ENCODE measurements at regions of chr5 and their contacts with region 1.

Region 1: GRCh38 chr5:56270568-56271392 is 37.6 kb upstream of the ANKRD55 start:
- DNase-seq: peak; percentile 65 to 74 (median 72)
- H3K4me3 ChIP-seq: no peak overlapping the region
- H3K4me3 Mint-ChIP-seq: peak overlapping the region; percentile 51 to 86 (median 74)
- H3K27ac ChIP-seq: no peak overlapping the region
- H3K27ac Mint-ChIP-seq: peak overlapping the region; percentile 30 to 84 (median 50)
- H3K4me1 ChIP-seq: peaks cover 13% of the 10 kb centered on the region
- H3K4me1 Mint-ChIP-seq: peaks cover 11 to 21% (median 13%) of the 10 kb centered on the region in 4 donors
- H3K27me3 ChIP-seq: no peaks in the 10 kb centered on the region
- H3K27me3 Mint-ChIP-seq: no peaks in the 10 kb centered on the region

Region 2: GRCh38 chr5:56323505-56323904 is 52.7 kb after region 1 on chr5:
- CTCF ChIA-PET with region 1: interaction called, 7 read pairs
- POLR2A ChIA-PET with region 1: interaction called, 4 read pairs
- intact Hi-C with region 1: loop called (anchors 1 kb)
- DNase-seq: no peak
- H3K4me3 ChIP-seq: no peak overlapping the region
- H3K4me3 Mint-ChIP-seq: no peak overlapping the region
- H3K27ac ChIP-seq: no peak overlapping the region
- H3K27ac Mint-ChIP-seq: peak overlapping the region in 3 of 7 donors; percentile 18 to 79 (median 64)
- H3K4me1 ChIP-seq: peaks cover 41% of the 10 kb centered on the region
- H3K4me1 Mint-ChIP-seq: peaks cover 31 to 69% (median 47%) of the 10 kb centered on the region in 4 donors
- H3K27me3 ChIP-seq: no peaks in the 10 kb centered on the region
- H3K27me3 Mint-ChIP-seq: no peaks in the 10 kb centered on the region

Region 3: DNA sequence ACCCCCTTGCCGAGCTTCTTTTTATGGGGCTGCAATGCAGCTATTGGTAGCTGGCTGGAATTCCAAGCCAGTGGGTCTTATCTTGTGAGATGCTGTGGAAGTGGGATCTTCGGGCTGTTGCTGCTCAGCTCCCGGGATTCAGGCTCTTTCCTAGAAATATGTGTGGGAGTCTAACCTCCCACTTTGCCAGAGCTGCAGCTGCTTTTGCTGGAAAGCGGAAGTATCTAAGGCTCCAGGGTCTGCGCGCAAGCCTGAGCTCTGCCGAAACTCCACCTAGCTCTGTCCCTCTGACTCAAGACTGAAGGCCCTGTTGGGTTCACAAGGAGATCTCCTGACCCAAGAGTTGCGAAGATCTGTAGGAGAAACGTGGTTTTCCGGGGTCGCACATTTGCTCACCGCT is 113.4 kb after region 1 on chr5:
- CTCF ChIA-PET with region 1: no interaction called
- POLR2A ChIA-PET with region 1: no interaction called
- intact Hi-C with region 1: no loop called
- DNase-seq: no peak
- H3K4me3 ChIP-seq: no peak overlapping the region
- H3K4me3 Mint-ChIP-seq: no peak overlapping the region
- H3K27ac ChIP-seq: no peak overlapping the region
- H3K27ac Mint-ChIP-seq: no peak overlapping the region
- H3K4me1 ChIP-seq: no peaks in the 10 kb centered on the region
- H3K4me1 Mint-ChIP-seq: peaks cover 0 to 2% (median 0%) of the 10 kb centered on the region in 4 donors
- H3K27me3 ChIP-seq: no peaks in the 10 kb centered on the region
- H3K27me3 Mint-ChIP-seq: peaks cover 0 to 2% of the 10 kb centered on the region in 2 donors

Region 4: GRCh38 chr5:56481428-56482357 is 210.9 kb after region 1 on chr5:
- CTCF ChIA-PET with region 1: interaction called, 13 read pairs
- POLR2A ChIA-PET with region 1: interaction called, 16 read pairs
- intact Hi-C with region 1: loop called (anchors 1 kb)
- DNase-seq: peak in 4 of 5 donors; percentile 13 to 39 (median 27)
- H3K4me3 ChIP-seq: peak overlapping the region; percentile 52 to 55
- H3K4me3 Mint-ChIP-seq: peak overlapping the region; percentile 87 to 95 (median 92)
- H3K27ac ChIP-seq: peak overlapping the region; percentile 80
- H3K27ac Mint-ChIP-seq: peak overlapping the region; percentile 83 to 98 (median 95)
- H3K4me1 ChIP-seq: peaks cover 49% of the 10 kb centered on the region
- H3K4me1 Mint-ChIP-seq: peaks cover 30 to 54% (median 42%) of the 10 kb centered on the region in 4 donors
- H3K27me3 ChIP-seq: no peaks in the 10 kb centered on the region
- H3K27me3 Mint-ChIP-seq: no peaks in the 10 kb centered on the region

Region 5: DNA sequence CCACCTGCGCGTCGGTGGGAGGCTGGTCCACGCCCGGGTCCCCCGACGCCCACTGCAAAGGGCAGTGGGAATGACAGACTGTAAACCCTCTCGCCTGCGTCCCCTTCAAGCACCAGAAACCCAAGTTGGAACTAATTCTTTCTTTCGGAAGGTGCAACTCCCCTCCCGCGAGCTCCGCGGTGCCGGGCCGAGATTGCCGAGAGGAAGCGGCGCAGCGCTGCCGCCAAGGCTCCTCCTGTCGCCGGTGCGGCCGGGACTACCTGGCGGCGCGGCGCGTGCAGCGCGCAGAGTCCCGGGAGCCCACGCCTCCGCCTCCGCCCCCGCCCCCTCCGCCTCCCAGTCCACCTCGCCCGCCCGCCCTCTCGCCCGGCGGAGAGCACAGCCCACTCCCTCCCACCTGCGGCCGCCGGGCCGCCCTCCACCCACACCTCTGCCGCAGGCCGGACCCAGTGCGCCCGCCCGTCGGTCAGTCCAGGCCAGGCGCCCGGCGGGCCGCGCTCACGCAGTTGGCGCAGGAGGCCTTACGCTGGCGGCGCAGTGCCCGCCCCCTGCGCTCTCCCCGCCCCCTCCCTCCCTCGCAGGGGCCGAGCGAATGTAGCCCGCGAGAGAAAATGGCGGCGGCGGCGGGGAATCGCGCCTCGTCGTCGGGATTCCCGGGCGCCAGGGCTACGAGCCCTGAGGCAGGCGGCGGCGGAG is 544.3 kb after region 1 on chr5 and contains the start of gene MAP3K1:
- CTCF ChIA-PET with region 1: interaction called, 11 read pairs
- POLR2A ChIA-PET with region 1: no interaction called
- intact Hi-C with region 1: loop called (anchors 1 kb)
- DNase-seq: peak; percentile 82 to 91 (median 88)
- H3K4me3 ChIP-seq: peak within 1 kb of the TSS; percentile 78 to 87
- H3K4me3 Mint-ChIP-seq: peak within 1 kb of the TSS; percentile 92 to 97 (median 94)
- H3K27ac ChIP-seq: peak within 1 kb of the TSS; percentile 90
- H3K27ac Mint-ChIP-seq: peak within 1 kb of the TSS; percentile 94 to 99 (median 96)
- H3K4me1 ChIP-seq: peaks cover 37% of the 10 kb centered on the region
- H3K4me1 Mint-ChIP-seq: peaks cover 16 to 47% (median 26%) of the 10 kb centered on the region in 4 donors
- H3K27me3 ChIP-seq: no peaks in the 10 kb centered on the region
- H3K27me3 Mint-ChIP-seq: no peaks in the 10 kb centered on the region
- total RNA-seq, gene MAP3K1: 139 to 146 TPM

Region 6: DNA sequence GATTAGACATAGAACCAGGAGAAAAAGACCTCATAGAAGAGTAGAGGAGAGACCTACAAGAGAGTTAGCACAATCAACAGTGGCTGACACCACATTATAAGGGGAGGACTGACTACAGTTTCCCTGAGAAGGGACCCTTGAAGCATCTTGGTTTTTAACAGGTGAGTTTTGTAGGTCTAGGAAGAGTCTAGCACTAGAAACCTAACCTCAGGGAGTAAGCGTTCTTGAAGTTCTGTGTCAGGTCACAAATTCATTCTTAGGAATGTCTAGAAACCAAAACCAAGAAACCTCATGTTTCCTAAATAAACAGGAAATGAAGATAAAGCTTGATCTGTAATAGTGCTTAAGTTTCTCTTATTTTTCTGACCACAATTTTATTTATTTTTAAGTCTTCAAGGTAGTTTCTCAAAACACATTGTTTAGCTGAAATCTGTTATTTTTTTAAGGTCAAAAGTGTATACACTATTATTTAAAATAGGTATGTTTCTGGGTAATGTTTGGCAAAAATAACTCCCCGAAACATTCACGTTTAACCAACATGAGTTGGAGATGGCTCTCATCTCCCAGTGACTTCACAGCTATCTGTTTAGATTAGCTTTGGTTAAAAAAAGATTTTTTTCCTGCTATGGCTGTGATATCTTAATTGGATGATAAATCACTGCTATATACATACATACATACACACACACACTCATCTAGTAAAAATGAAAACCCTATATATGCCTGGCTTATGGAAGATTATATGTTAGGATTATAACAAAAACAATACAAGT is 581.6 kb after region 1 on chr5:
- CTCF ChIA-PET with region 1: interaction called, 8 read pairs
- POLR2A ChIA-PET with region 1: interaction called, 10 read pairs
- intact Hi-C with region 1: loop called (anchors 5 kb)
- DNase-seq: peak in 3 of 5 donors; percentile 20 to 35 (median 24)
- H3K4me3 ChIP-seq: no peak overlapping the region
- H3K4me3 Mint-ChIP-seq: peak overlapping the region; percentile 67 to 88 (median 74)
- H3K27ac ChIP-seq: peak overlapping the region; percentile 34
- H3K27ac Mint-ChIP-seq: peak overlapping the region in 6 of 7 donors; percentile 43 to 83 (median 74)
- H3K4me1 ChIP-seq: peaks cover 94% of the 10 kb centered on the region
- H3K4me1 Mint-ChIP-seq: peaks cover 64 to 94% (median 80%) of the 10 kb centered on the region in 4 donors
- H3K27me3 ChIP-seq: no peaks in the 10 kb centered on the region
- H3K27me3 Mint-ChIP-seq: no peaks in the 10 kb centered on the region

Region 7: DNA sequence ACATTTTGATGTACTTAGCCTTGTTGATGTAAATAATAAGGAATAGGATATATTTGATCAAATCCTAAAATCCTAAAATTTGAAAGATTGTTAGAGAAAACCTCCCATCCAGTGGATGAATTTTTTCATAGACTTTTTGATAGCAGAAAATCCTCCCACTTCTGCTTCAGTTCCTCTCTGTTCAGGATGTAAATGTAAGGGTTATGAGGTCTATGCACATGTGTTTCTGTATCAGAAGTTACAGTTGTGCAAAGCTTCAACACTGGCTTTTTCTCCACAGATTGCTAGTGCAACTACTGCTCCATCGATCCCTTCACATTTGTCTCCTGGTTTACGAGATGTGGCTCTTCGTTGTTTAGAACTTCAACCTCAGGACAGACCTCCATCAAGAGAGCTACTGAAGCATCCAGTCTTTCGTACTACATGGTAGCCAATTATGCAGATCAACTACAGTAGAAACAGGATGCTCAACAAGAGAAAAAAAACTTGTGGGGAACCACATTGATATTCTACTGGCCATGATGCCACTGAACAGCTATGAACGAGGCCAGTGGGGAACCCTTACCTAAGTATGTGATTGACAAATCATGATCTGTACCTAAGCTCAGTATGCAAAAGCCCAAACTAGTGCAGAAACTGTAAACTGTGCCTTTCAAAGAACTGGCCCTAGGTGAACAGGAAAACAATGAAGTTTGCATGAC is 622.6 kb after region 1 on chr5:
- CTCF ChIA-PET with region 1: interaction called, 38 read pairs
- POLR2A ChIA-PET with region 1: no interaction called
- intact Hi-C with region 1: loop called (anchors 2 kb)
- DNase-seq: no peak
- H3K4me3 ChIP-seq: no peak overlapping the region
- H3K4me3 Mint-ChIP-seq: no peak overlapping the region
- H3K27ac ChIP-seq: no peak overlapping the region
- H3K27ac Mint-ChIP-seq: peak overlapping the region in 3 of 7 donors; percentile 21 to 70 (median 42)
- H3K4me1 ChIP-seq: no peaks in the 10 kb centered on the region
- H3K4me1 Mint-ChIP-seq: peaks cover 8 to 26% (median 11%) of the 10 kb centered on the region in 4 donors
- H3K27me3 ChIP-seq: no peaks in the 10 kb centered on the region
- H3K27me3 Mint-ChIP-seq: no peaks in the 10 kb centered on the region

Region 8: DNA sequence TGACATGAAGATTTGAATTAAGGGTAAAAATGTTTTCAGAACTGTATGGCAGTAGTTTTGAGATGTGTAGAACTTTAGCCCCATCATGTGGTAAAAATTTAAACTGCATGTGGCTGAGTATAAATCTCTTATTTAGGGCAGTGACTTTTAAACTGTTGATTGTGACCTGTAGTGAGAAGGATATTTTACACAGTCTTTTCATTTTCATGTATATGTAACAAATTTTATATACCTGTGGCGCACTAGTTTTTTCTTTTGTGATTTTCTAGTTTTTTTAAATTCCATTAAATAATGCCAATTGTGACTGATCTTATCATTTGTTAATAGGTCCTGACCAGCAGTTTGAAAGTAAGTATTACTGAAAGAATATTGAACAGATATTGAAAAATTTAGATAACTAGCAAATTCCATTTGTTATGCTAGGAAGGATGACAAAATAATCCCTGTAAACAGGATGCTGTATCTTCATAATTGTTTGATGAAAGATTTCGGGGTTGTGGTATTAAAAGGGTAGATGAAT is 950.3 kb after region 1 on chr5:
- CTCF ChIA-PET with region 1: interaction called, 3 read pairs
- POLR2A ChIA-PET with region 1: interaction called, 5 read pairs
- intact Hi-C with region 1: loop called (anchors 1 kb)
- DNase-seq: peak; percentile 44 to 76 (median 74)
- H3K4me3 ChIP-seq: no peak overlapping the region
- H3K4me3 Mint-ChIP-seq: peak overlapping the region in 2 of 8 donors; percentile 11 to 15
- H3K27ac ChIP-seq: no peak overlapping the region
- H3K27ac Mint-ChIP-seq: peak overlapping the region; percentile 24 to 90 (median 68)
- H3K4me1 ChIP-seq: peaks cover 38% of the 10 kb centered on the region
- H3K4me1 Mint-ChIP-seq: peaks cover 26 to 67% (median 44%) of the 10 kb centered on the region in 4 donors
- H3K27me3 ChIP-seq: no peaks in the 10 kb centered on the region
- H3K27me3 Mint-ChIP-seq: no peaks in the 10 kb centered on the region

Measured in CD4-positive, alpha-beta memory T cell (primary cell).